Mammary epithelial cell (primary cell): ENCODE measurements at regions of chr12 and their contacts with region 1.

Region 1: GRCh38 chr12:12486661-12487240 is 75.9 kb downstream of the DUSP16 start:
- DNase-seq: no peak
- H3K4me3 ChIP-seq: no peak overlapping the region
- H3K27ac ChIP-seq: no peak overlapping the region
- H3K4me1 ChIP-seq: no peaks in the 10 kb centered on the region
- H3K27me3 ChIP-seq: no peaks in the 10 kb centered on the region
- CTCF ChIP-seq: no peak

Region 2: DNA sequence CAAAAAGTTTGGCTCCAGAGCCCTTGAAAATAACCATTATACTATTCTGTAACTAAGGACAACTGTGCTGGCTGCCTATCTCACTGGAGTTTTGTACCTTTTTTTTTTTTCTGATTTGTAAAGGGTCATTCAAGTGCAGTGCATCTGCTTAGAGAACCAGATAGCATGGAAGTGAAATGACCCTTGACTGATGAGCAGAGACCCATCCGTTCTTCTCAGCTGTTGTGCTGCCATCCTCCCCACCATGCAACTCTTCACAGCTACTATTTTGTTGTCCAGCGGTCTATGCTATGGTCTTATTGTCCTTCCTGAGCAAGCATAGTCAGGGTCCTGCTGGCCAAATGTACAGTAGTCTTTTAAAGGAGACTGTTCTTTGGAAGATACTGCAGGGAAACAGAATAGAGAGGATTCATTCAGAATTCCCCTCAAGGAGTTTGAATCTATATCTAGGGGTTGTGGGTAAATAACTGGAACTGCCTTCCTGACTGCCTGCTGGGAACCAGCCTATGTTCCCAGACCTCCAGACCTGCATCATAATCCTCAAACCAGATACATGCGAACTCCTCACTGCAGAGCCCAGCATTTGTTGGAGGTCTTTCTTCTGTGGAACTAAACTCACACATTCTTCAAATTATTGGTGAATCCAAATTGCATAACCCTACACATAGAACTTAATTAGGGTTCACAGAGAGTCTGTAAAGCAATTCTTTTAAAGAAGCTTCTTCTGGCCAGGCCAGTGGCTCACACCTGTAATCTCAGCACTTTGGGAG is 168.1 kb after region 1 on chr12:
- CTCF ChIA-PET with region 1: no interaction called
- dilution Hi-C with region 1: no loop called
- in situ Hi-C with region 1: no loop called
- intact Hi-C with region 1: loop called (anchors 10 kb)
- DNase-seq: no peak
- H3K4me3 ChIP-seq: no peak overlapping the region
- H3K27ac ChIP-seq: no peak overlapping the region
- H3K4me1 ChIP-seq: no peaks in the 10 kb centered on the region
- H3K27me3 ChIP-seq: no peaks in the 10 kb centered on the region
- CTCF ChIP-seq: no peak

Region 3: GRCh38 chr12:12964255-12964654 is 477.5 kb after region 1 on chr12:
- CTCF ChIA-PET with region 1: no interaction called
- dilution Hi-C with region 1: no loop called
- in situ Hi-C with region 1: no loop called
- intact Hi-C with region 1: no loop called
- DNase-seq: no peak
- H3K4me3 ChIP-seq: no peak overlapping the region
- H3K27ac ChIP-seq: no peak overlapping the region
- H3K4me1 ChIP-seq: no peaks in the 10 kb centered on the region
- H3K27me3 ChIP-seq: no peaks in the 10 kb centered on the region
- CTCF ChIP-seq: no peak